Activated CD4-positive, alpha-beta T cell treated with anti-CD3 and anti-CD28 coated beads for 36 hours (primary cell): ENCODE measurements at regions of chr11 and their contacts with region 1.

Region 1: DNA sequence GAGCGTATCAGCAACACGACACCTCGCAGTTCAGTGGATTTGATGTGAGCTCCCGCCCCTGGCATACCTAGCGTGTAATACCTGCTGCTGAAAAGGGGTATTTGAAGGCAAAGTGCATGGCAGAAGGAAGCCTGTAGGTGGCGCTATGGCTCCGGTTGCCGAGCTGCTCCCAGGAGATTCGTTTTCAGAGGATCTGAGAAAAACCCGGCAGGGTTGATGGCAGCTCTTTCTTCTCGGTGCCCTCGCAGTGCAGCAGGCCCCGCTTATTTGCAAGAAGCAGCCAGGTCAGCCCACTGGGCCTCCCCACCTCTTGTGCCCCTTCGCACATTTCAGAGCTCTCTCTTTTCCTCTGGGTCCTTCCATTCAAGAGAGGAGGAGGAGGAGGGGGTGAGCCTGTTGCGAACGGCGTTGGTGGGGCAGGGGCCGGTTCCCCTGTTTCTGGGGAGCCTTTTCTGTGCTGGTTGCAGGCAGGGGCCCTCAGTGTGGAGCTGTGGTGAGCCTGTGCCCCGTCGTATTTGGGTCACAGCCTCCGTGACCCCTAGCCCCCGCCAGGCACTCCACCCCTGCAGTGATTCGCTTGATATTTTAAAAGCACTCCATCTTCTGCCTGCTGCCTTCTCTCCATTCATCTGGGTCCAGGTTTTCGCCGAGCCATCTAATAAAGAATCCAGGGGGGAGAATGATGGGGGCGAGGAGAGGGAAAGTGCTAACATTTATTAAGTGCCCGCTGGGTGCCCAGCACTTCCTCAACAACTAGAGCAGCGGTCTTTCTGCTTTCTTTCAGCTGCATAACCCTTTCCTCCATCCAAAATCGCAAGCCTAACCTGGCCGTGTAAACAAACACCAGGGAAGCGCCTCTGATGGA is 85.3 kb upstream of the SYT13 start:
- DNase-seq: peak; percentile 84
- ATAC-seq: peak; percentile 76
- H3K4me3 Mint-ChIP-seq: no peak overlapping the region
- H3K27ac Mint-ChIP-seq: no peak overlapping the region
- H3K4me1 Mint-ChIP-seq: peaks cover 16% of the 10 kb centered on the region
- H3K27me3 Mint-ChIP-seq: peaks cover 10% of the 10 kb centered on the region

Region 2: GRCh38 chr11:45339729-45340519 is 31.6 kb before region 1 on chr11:
- CTCF ChIA-PET with region 1: interaction called, 11 read pairs
- POLR2A ChIA-PET with region 1: no interaction called
- intact Hi-C with region 1: no loop called
- DNase-seq: peak; percentile 97
- ATAC-seq: peak; percentile 99
- H3K4me3 Mint-ChIP-seq: peak overlapping the region; percentile 55
- H3K27ac Mint-ChIP-seq: no peak overlapping the region
- H3K4me1 Mint-ChIP-seq: peaks cover 10% of the 10 kb centered on the region
- H3K27me3 Mint-ChIP-seq: peaks cover 4% of the 10 kb centered on the region

Region 3: DNA sequence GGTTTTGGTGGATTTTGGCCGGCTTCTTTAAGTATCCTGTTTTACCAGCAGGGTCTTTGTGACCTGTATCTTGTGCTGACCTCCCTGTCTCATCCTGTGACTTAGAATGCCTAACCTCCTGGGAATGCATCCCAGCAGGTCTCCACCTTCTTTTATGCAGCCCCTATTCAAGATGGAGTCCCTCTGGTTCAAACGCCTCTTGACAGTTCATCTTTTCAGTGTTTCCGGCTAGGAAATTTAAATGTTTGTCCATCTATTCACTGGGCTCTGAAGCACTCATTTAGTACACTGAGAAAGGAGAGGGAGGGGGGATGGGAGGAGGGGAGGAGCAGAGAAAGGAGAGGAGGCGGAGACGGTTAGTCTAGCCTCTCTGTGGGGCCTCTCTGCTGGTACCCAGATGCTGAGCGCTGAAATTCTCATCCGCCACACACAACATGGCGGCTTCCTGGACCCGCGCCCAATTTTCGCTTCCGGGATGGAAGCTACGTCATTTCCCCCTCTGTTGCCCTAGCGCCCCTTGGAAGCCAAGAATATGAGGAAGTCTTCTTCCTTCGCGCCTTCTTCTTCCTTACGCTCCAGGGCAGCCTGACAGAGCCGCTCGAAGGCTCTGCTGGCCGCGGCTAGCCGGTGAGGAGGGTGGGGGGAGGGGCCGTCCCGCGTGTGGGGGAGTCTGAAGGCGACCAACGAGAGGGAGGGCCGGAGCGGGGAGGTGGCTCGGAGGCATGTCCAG is 16.3 kb before region 1 on chr11:
- CTCF ChIA-PET with region 1: interaction called, 20 read pairs
- POLR2A ChIA-PET with region 1: no interaction called
- intact Hi-C with region 1: no loop called
- DNase-seq: peak; percentile 93
- ATAC-seq: peak; percentile 97
- H3K4me3 Mint-ChIP-seq: peak overlapping the region; percentile 75
- H3K27ac Mint-ChIP-seq: peak overlapping the region; percentile 72
- H3K4me1 Mint-ChIP-seq: peaks cover 21% of the 10 kb centered on the region
- H3K27me3 Mint-ChIP-seq: peaks cover 2% of the 10 kb centered on the region

Region 4: GRCh38 chr11:45385844-45386243 is 14.4 kb after region 1 on chr11:
- CTCF ChIA-PET with region 1: interaction called, 12 read pairs
- POLR2A ChIA-PET with region 1: no interaction called
- intact Hi-C with region 1: no loop called
- DNase-seq: no peak
- ATAC-seq: peak; percentile 75
- H3K4me3 Mint-ChIP-seq: no peak overlapping the region
- H3K27ac Mint-ChIP-seq: no peak overlapping the region
- H3K4me1 Mint-ChIP-seq: peaks cover 8% of the 10 kb centered on the region
- H3K27me3 Mint-ChIP-seq: peaks cover 3% of the 10 kb centered on the region

Region 5: DNA sequence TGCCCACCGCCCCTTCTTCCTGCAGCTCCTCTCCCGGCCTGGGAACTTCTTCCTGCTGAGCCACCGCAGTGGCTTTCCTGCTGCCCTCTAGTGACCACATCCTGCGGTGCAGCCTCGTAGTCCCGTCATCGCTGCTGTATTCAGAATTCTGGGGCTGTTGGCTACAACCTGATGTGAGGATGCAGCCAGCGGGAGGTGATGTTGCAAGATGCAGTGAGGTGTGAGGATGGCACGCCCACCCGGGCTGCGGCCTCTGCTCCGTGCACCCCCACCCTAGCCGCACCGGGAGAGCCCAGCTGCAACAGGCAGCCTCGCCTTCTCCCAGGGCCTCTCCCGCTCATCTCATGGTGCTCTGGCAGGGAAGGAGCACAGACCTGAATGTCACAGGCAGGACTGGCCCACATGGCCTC is 283.9 kb after region 1 on chr11:
- CTCF ChIA-PET with region 1: interaction called, 19 read pairs
- POLR2A ChIA-PET with region 1: no interaction called
- intact Hi-C with region 1: loop called (anchors 1 to 2 kb)
- DNase-seq: peak; percentile 81
- ATAC-seq: peak; percentile 83
- H3K4me3 Mint-ChIP-seq: no peak overlapping the region
- H3K27ac Mint-ChIP-seq: no peak overlapping the region
- H3K4me1 Mint-ChIP-seq: peaks cover 3% of the 10 kb centered on the region
- H3K27me3 Mint-ChIP-seq: peaks cover 15% of the 10 kb centered on the region